ENCODE measurements at regions of chr4 and their contacts with region 1.

Region 1: GRCh38 chr4:169010125-169011023 is at the start of gene CBR4:
- DNase-seq: peak; percentile 99
- H3K4me3 ChIP-seq: peak within 1 kb of the TSS; percentile 58 to 71 (median 64)
- H3K27ac ChIP-seq: peak within 1 kb of the TSS; percentile 85 to 93 (median 89)
- H3K4me1 ChIP-seq: peaks cover 17 to 34% (median 28%) of the 10 kb centered on the region in 4 donors
- H3K27me3 ChIP-seq: no peaks in the 10 kb centered on the region
- CTCF ChIP-seq: peak in 1 of 3 experiments; percentile 54
- EP300 ChIP-seq: no peak
- POLR2A ChIP-seq: no peak
- total RNA-seq, gene CBR4: 9.3 to 15.8 (median 12.4) TPM

Region 2: GRCh38 chr4:168514249-168514852 is 496.0 kb before region 1 on chr4:
- intact Hi-C with region 1: loop called (anchors 10 kb)
- DNase-seq: no peak
- H3K4me3 ChIP-seq: no peak overlapping the region
- H3K27ac ChIP-seq: no peak overlapping the region
- H3K4me1 ChIP-seq: peaks cover 0 to 6% (median 3%) of the 10 kb centered on the region in 4 donors
- H3K27me3 ChIP-seq: no peaks in the 10 kb centered on the region
- CTCF ChIP-seq: peak; percentile 36 to 49 (median 47)
- EP300 ChIP-seq: no peak
- POLR2A ChIP-seq: no peak

Region 3: DNA sequence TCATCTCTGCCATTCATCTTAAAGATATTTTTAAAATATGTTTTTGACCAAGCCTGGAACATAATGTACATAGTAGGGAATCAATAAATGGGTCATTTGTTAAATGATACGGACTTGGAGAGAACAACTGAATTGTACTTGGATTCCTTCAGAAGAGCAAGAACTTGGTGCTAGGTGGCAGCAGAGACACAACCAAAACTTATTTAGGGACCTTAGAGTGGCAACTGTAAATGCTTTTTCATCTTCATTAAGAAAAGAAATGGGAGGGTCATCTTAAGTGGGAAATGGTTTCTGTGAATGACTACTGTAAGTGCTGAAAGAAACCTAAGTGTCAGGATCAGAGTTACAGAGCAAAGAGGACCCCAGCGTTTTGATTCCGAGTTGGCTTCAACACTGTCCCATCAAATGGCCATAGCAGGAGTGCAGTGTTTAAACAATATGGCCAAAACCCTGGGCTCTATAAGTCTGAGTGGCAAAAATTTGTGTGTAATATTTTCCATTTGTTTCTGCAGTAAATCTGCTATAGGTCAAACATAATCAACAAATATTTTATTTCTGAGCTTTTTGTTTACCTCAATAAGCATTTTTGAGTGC is 299.9 kb before region 1 on chr4:
- intact Hi-C with region 1: loop called (anchors 10 kb)
- DNase-seq: no peak
- H3K4me3 ChIP-seq: no peak overlapping the region
- H3K27ac ChIP-seq: peak overlapping the region; percentile 75 to 82 (median 79)
- H3K4me1 ChIP-seq: peaks cover 19 to 43% (median 29%) of the 10 kb centered on the region in 4 donors
- H3K27me3 ChIP-seq: no peaks in the 10 kb centered on the region
- CTCF ChIP-seq: peak; percentile 68 to 74 (median 72)
- EP300 ChIP-seq: no peak
- POLR2A ChIP-seq: no peak

Region 4: GRCh38 chr4:169189372-169189771 is 179.0 kb after region 1 on chr4:
- intact Hi-C with region 1: no loop called
- DNase-seq: no peak
- H3K4me3 ChIP-seq: no peak overlapping the region
- H3K27ac ChIP-seq: no peak overlapping the region
- H3K4me1 ChIP-seq: peaks cover 0 to 1% (median under 1%) of the 10 kb centered on the region in 4 donors
- H3K27me3 ChIP-seq: no peaks in the 10 kb centered on the region
- CTCF ChIP-seq: no peak
- EP300 ChIP-seq: no peak
- POLR2A ChIP-seq: no peak

Region 5: GRCh38 chr4:169270810-169271691 is 260.7 kb after region 1 on chr4 and contains the start of gene SH3RF1:
- intact Hi-C with region 1: loop called (anchors 5 kb)
- DNase-seq: peak; percentile 94
- H3K4me3 ChIP-seq: peak within 1 kb of the TSS; percentile 82 to 96 (median 92)
- H3K27ac ChIP-seq: peak within 1 kb of the TSS; percentile 88 to 93 (median 90)
- H3K4me1 ChIP-seq: peaks cover 29 to 38% (median 35%) of the 10 kb centered on the region in 4 donors
- H3K27me3 ChIP-seq: no peaks in the 10 kb centered on the region
- CTCF ChIP-seq: peak in 2 of 3 experiments; percentile 34 to 38
- EP300 ChIP-seq: no peak
- POLR2A ChIP-seq: peak; percentile 69
- total RNA-seq, gene SH3RF1: 10.0 to 11.8 (median 10.9) TPM

Region 6: GRCh38 chr4:169485791-169486742 is 475.7 kb after region 1 on chr4:
- intact Hi-C with region 1: loop called (anchors 10 kb)
- DNase-seq: no peak
- H3K4me3 ChIP-seq: no peak overlapping the region
- H3K27ac ChIP-seq: no peak overlapping the region
- H3K4me1 ChIP-seq: no peaks in the 10 kb centered on the region
- H3K27me3 ChIP-seq: no peaks in the 10 kb centered on the region
- CTCF ChIP-seq: peak; percentile 47 to 50 (median 48)
- EP300 ChIP-seq: no peak
- POLR2A ChIP-seq: no peak

Measured in esophagus muscularis mucosa (tissue), 4 donors.